A673 (cell line): ENCODE measurements at regions of chr3 and their contacts with region 1.

Region 1: DNA sequence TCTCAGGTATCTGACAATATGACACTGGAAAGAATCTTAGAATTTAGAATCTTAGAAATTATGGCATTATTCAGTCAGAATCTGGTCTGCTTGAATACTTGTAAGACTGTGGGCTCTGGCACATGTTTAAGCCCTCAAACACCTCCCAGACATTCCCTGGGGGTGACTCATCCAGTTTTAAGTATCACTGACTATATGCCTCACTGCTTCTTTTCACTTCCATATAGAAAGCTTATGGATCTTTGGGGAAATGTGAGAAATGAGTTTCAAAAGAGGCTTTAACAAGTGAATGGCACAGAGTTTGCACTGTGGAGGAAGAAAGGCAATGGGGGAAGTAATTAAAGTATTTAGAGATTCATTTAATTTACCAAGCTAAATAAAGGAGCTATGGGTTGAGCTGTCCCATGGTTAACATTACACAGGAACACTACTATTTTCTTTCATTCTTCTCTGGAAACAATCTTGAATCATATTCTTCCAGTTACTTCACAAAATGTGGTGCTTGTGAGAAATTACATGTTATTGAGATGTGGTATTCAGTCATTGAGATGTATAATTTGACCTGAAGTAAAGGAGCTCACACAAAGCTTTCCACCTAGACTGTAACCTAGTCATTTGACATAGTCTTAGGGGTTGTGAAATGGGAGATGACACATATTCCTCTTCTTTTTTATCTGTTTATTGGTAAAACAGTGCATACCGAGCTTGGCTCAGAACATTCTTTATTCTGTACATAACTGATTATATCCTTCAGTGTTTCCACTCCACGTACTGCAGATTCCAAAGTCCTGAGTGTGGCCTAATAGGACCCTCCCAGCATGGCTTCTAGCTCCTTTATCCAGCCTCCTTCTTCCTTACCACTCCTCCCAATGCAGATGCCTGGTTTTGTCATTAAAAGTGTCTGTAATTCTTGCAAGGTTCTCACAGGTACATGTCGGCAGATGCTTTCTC is 544.6 kb upstream of the NECTIN3 start:
- DNase-seq: peak; percentile 92
- H3K4me3 ChIP-seq: no peak overlapping the region
- H3K27ac ChIP-seq: peak overlapping the region; percentile 53
- H3K4me1 ChIP-seq: peaks cover 20% of the 10 kb centered on the region
- H3K27me3 ChIP-seq: no peaks in the 10 kb centered on the region
- CTCF ChIP-seq: no peak

Region 2: DNA sequence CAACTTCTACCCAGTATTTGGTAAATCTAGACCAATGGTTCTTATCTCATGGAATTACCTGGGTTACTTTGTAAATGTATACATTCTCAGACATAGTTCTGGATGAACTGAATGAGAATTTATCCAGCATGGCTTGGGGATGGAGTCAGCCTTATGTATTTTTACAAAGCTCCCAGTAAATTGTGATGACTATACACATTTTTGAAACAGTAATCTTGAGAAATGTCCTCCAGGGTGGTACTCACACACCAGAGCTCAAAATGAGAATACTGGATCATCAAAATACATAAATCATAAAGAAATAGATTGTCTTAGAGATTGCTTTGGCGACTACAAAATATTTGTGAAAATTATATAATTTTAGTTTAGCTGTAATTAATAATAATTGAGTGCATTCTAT is 467.6 kb before region 1 on chr3:
- CTCF ChIA-PET with region 1: no interaction called
- POLR2A ChIA-PET with region 1: no interaction called
- intact Hi-C with region 1: no loop called
- DNase-seq: no peak
- H3K4me3 ChIP-seq: no peak overlapping the region
- H3K27ac ChIP-seq: no peak overlapping the region
- H3K4me1 ChIP-seq: no peaks in the 10 kb centered on the region
- H3K27me3 ChIP-seq: no peaks in the 10 kb centered on the region
- CTCF ChIP-seq: no peak

Region 3: GRCh38 chr3:110420158-110420641 is 106.9 kb before region 1 on chr3:
- CTCF ChIA-PET with region 1: no interaction called
- POLR2A ChIA-PET with region 1: no interaction called
- intact Hi-C with region 1: loop called (anchors 5 kb)
- DNase-seq: peak; percentile 81
- H3K4me3 ChIP-seq: no peak overlapping the region
- H3K27ac ChIP-seq: peak overlapping the region; percentile 83
- H3K4me1 ChIP-seq: peaks cover 20% of the 10 kb centered on the region
- H3K27me3 ChIP-seq: no peaks in the 10 kb centered on the region
- CTCF ChIP-seq: no peak